ENCODE measurements at regions of chr6 and their contacts with region 1.

Region 1: GRCh38 chr6:76752841-76753240 is 680.4 kb upstream of the IMPG1 start:
- DNase-seq: no peak
- H3K4me3 Mint-ChIP-seq: no peak overlapping the region
- H3K27ac Mint-ChIP-seq: no peak overlapping the region
- H3K4me1 Mint-ChIP-seq: no peaks in the 10 kb centered on the region
- H3K27me3 Mint-ChIP-seq: no peaks in the 10 kb centered on the region
- CTCF ChIP-seq: no peak

Region 2: GRCh38 chr6:76724760-76725159 is 28.1 kb before region 1 on chr6:
- CTCF ChIA-PET with region 1: no interaction called
- intact Hi-C with region 1: loop called (anchors 2 kb)
- DNase-seq: no peak
- H3K4me3 Mint-ChIP-seq: no peak overlapping the region
- H3K27ac Mint-ChIP-seq: no peak overlapping the region
- H3K4me1 Mint-ChIP-seq: no peaks in the 10 kb centered on the region
- H3K27me3 Mint-ChIP-seq: no peaks in the 10 kb centered on the region
- CTCF ChIP-seq: no peak

Region 3: DNA sequence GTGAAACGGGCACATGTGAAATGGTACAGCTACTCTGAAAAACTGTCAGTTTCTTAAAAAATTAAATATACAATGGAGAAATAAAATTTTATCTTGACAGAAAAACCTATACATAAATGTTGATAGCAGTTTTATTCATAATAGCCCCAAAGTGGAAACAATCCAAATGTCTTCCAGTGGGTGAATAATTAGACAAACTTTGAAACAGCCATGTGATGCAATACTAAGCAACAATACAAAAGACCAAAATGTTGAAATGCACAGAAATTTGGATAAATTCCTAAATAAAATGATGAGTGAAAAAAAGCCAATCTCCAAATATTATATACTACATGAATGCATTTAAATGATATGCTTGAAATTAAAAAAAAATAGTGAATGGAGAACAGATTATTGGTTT is 187.3 kb after region 1 on chr6:
- CTCF ChIA-PET with region 1: no interaction called
- intact Hi-C with region 1: no loop called
- DNase-seq: no peak
- H3K4me3 Mint-ChIP-seq: no peak overlapping the region
- H3K27ac Mint-ChIP-seq: peak overlapping the region; percentile 63
- H3K4me1 Mint-ChIP-seq: no peaks in the 10 kb centered on the region
- H3K27me3 Mint-ChIP-seq: no peaks in the 10 kb centered on the region
- CTCF ChIP-seq: no peak

Region 4: DNA sequence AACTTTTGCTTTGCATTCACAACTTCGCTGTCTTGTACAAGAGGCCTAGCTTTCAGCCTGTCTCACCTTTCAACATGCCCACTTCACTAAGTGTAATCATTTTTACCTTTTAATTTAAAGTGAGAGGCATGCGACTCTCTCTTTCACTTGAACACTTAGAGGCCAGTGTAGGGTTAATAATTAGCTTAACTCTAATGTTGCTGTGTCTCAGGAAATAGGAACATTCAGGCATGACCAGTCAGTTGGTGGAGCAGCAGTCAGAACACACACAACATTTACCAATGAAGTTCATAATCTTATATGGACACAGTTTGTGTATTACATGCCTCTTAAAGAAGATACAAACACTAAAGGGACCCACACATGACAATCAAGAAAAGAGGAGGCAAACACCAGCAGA is 662.9 kb after region 1 on chr6:
- CTCF ChIA-PET with region 1: no interaction called
- intact Hi-C with region 1: no loop called
- DNase-seq: no peak
- H3K4me3 Mint-ChIP-seq: no peak overlapping the region
- H3K27ac Mint-ChIP-seq: no peak overlapping the region
- H3K4me1 Mint-ChIP-seq: peaks cover 11% of the 10 kb centered on the region
- H3K27me3 Mint-ChIP-seq: no peaks in the 10 kb centered on the region
- CTCF ChIP-seq: no peak